Dorsolateral prefrontal cortex (tissue), 120 donors: ENCODE measurements at regions of chr2 and their contacts with region 1.

Region 1: DNA sequence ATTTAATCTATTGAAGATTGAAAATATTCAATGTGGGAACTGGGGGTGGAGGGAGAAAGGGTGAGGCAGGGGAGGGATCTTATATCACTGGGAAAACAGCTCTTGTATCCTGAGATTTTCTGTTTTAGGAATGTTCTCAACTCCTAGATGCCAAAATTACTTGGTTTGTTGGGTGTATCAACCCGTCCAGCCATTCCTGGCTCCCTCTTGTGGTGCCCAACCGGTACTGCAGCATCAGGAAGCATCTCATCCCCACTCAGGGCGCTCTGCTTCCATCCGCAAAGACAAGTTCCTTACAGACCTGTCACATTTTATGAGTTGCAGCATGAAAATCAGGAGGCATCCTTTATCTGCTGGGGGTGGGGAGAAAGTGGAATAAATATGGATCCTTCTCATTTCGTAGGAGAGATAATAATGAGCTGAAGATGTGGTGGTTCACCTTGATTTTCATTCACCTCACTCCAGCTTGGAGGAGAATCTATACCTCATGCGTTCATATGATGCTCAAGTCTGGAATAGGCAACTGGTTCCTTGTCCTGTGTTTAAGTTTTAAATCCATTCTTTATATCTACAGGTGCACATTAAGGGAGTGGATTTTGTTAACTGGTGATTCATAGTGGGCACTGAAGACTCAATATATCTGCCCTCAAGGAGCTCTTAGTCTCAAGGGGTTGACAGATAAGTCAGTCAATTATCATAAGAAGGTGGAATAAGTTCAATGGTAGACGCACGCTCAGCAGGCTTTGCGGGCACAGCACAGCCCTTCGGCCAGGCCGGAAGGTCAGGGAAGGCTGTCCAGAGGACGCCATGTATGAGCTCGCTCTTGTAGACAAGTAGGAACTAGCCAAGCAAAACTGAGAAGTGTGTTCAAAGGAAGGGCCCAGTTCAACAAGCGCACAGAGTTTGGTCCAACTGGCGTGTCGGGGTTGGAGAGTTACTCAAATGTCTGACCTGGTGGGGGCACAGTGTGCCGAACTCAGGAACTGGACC is 127.3 kb downstream of the RNF144A start:
- DNase-seq: peak; percentile 73 to 86 (median 80)
- H3K4me3 ChIP-seq: no peak overlapping the region
- H3K27ac ChIP-seq: peak overlapping the region in 36 of 59 donors; percentile 8 to 70 (median 34)
- H3K27me3 ChIP-seq: no peaks in the 10 kb centered on the region
- CTCF ChIP-seq: peak; percentile 63 to 98 (median 95)

Region 2: GRCh38 chr2:6896930-6897759 is 147.4 kb before region 1 on chr2:
- intact Hi-C with region 1: loop called (anchors 2 to 5 kb)
- DNase-seq: no peak
- H3K4me3 ChIP-seq: no peak overlapping the region
- H3K27ac ChIP-seq: peak overlapping the region in 5 of 59 donors; percentile 6 to 37 (median 33)
- H3K27me3 ChIP-seq: no peaks in the 10 kb centered on the region
- CTCF ChIP-seq: peak; percentile 60 to 95 (median 81)

Region 3: GRCh38 chr2:7338961-7339360 is 294.4 kb after region 1 on chr2:
- intact Hi-C with region 1: no loop called
- DNase-seq: no peak
- H3K4me3 ChIP-seq: no peak overlapping the region
- H3K27ac ChIP-seq: no peak overlapping the region
- H3K27me3 ChIP-seq: no peaks in the 10 kb centered on the region
- CTCF ChIP-seq: no peak